Adrenal gland (tissue), 19 donors: ENCODE measurements at regions of chr10 and their contacts with region 1.

Region 1: GRCh38 chr10:60816628-60817397 is 38.5 kb downstream of the CDK1 start:
- DNase-seq: peak; percentile 53 to 81 (median 70)
- H3K4me3 ChIP-seq: no peak overlapping the region
- H3K27ac ChIP-seq: peak overlapping the region in 3 of 5 donors; percentile 18 to 50 (median 26)
- H3K4me1 ChIP-seq: peaks cover 6 to 19% of the 10 kb centered on the region in 2 donors
- H3K27me3 ChIP-seq: no peaks in the 10 kb centered on the region
- CTCF ChIP-seq: peak; percentile 65 to 97 (median 88)
- POLR2A ChIP-seq: no peak

Region 2: DNA sequence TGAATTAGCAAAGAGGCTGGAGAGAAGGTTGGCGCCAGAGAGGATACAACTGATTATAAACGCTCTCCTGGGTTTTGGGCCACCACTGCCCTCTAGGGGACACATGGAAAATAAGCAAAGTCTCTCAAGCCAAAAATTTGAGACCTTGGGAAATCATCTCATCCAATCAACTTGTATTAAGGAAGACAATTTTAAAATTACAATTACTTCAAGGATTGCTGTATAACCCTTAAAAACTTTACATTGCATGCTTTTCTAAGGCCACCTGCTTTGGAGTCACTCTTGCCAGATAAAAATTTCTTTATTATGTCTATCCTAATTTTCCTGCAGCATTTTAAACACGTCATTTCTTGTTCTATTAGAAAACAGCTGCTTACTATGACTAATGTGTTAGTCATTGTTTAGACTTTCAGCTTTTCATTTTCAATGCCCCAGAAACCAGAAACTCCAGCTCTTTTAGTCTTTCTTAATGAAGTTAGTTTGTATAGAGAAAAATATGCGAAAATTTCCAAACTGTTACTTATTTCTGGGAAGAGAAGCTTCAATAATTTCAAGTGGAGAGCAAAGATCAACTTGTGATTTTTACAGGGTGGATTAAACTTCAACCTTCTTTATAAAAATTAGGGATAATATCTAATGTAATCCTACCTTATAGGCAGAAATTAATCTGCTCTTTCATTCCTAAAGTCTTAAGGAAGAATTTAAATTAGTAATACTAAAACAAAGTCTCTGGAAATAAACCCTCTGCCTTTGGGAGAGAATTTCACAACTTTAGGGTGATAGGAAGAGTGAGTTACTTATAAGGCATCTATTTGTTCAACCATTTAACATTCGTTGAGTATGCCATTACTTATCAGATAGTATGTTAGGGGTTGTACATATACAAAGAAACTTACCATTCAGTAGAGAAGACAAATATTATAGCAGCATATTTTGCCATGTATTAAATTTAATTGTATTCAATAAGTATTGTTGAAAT is 147.7 kb after region 1 on chr10:
- intact Hi-C with region 1: loop called (anchors 5 kb)
- DNase-seq: peak; percentile 77 to 90 (median 82)
- H3K4me3 ChIP-seq: peak overlapping the region in 1 of 4 donors; percentile 32
- H3K27ac ChIP-seq: peak overlapping the region; percentile 59 to 86 (median 72)
- H3K4me1 ChIP-seq: peaks cover 10 to 33% of the 10 kb centered on the region in 2 donors
- H3K27me3 ChIP-seq: no peaks in the 10 kb centered on the region
- CTCF ChIP-seq: peak; percentile 78 to 93 (median 87)
- POLR2A ChIP-seq: peak in 1 of 2 donors; percentile 38

Region 3: GRCh38 chr10:61000769-61001730 is 184.2 kb after region 1 on chr10:
- intact Hi-C with region 1: no loop called
- DNase-seq: peak; percentile 25 to 54 (median 40)
- H3K4me3 ChIP-seq: peak overlapping the region in 2 of 4 donors; percentile 21 to 88
- H3K27ac ChIP-seq: no peak overlapping the region
- H3K4me1 ChIP-seq: peaks cover 0 to 8% of the 10 kb centered on the region in 2 donors
- H3K27me3 ChIP-seq: no peaks in the 10 kb centered on the region
- CTCF ChIP-seq: no peak
- POLR2A ChIP-seq: no peak

Region 4: GRCh38 chr10:61179766-61180165 is 363.0 kb after region 1 on chr10:
- intact Hi-C with region 1: no loop called
- DNase-seq: no peak
- H3K4me3 ChIP-seq: no peak overlapping the region
- H3K27ac ChIP-seq: no peak overlapping the region
- H3K4me1 ChIP-seq: no peaks in the 10 kb centered on the region
- H3K27me3 ChIP-seq: no peaks in the 10 kb centered on the region
- CTCF ChIP-seq: no peak
- POLR2A ChIP-seq: no peak

Region 5: DNA sequence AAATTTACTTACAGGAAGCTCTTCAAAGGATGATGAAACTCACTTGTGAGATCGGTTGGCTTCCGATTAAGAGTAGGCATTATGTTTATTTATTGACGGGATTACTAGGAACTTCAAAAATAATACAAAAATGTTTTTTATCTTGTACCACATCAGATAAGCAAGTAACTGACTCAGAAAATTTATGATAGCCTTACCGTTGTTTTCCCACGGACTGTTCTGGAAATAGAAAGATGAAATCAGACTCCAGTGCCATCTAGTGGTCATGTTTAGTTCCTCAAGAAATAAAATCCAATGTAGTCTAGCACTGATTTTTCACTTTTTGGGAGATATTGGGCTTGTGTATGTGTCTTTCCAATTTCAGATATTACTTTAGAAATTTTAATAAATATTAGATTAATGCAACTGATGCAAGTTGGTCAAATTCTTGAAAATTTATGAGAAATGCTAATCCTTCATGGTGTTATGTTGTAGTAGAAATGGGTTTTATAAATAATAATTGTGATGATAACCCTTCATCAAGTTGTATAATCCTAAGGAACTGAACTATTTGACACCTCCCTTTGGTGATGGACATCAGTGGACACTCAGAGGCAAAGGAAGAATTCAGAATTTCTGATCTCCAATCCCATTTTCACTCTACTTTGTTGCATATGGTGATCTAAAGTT is 467.5 kb after region 1 on chr10:
- intact Hi-C with region 1: loop called in 1 of 2 experiments (anchors 5 kb)
- DNase-seq: peak in 4 of 7 donors; percentile 11 to 36 (median 27)
- H3K4me3 ChIP-seq: peak overlapping the region in 1 of 4 donors; percentile 25
- H3K27ac ChIP-seq: peak overlapping the region in 3 of 5 donors; percentile 17 to 57 (median 44)
- H3K4me1 ChIP-seq: peaks cover 5 to 8% of the 10 kb centered on the region in 2 donors
- H3K27me3 ChIP-seq: no peaks in the 10 kb centered on the region
- CTCF ChIP-seq: peak; percentile 74 to 91 (median 82)
- POLR2A ChIP-seq: no peak

Region 6: DNA sequence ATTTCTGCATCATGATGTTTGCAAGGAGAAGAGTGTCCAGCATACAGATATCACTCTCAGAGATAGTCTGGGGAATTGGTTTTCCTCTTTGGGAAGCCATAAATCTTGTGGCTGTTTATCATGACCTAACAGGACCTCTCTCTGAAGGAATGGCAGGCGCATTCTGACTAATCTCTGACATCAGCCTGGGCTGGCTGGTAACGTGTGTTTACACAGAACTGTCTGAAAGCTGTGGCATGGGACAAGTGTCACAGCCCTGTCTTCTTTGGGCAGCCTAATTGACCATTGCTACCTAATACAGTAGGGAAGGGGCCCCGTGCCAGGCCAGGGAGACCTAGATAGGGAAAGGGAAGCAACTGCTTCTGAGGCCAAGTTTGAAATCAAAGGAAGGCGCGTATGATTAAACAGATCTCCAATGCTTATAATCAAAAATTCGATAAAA is 772.0 kb after region 1 on chr10:
- intact Hi-C with region 1: loop called in 1 of 2 experiments (anchors 10 kb)
- DNase-seq: peak in 1 of 7 donors; percentile 1
- H3K4me3 ChIP-seq: no peak overlapping the region
- H3K27ac ChIP-seq: no peak overlapping the region
- H3K4me1 ChIP-seq: no peaks in the 10 kb centered on the region
- H3K27me3 ChIP-seq: no peaks in the 10 kb centered on the region
- CTCF ChIP-seq: no peak
- POLR2A ChIP-seq: no peak